B cell (primary cell): ENCODE measurements at regions of chrX and their contacts with region 1.

Region 1: DNA sequence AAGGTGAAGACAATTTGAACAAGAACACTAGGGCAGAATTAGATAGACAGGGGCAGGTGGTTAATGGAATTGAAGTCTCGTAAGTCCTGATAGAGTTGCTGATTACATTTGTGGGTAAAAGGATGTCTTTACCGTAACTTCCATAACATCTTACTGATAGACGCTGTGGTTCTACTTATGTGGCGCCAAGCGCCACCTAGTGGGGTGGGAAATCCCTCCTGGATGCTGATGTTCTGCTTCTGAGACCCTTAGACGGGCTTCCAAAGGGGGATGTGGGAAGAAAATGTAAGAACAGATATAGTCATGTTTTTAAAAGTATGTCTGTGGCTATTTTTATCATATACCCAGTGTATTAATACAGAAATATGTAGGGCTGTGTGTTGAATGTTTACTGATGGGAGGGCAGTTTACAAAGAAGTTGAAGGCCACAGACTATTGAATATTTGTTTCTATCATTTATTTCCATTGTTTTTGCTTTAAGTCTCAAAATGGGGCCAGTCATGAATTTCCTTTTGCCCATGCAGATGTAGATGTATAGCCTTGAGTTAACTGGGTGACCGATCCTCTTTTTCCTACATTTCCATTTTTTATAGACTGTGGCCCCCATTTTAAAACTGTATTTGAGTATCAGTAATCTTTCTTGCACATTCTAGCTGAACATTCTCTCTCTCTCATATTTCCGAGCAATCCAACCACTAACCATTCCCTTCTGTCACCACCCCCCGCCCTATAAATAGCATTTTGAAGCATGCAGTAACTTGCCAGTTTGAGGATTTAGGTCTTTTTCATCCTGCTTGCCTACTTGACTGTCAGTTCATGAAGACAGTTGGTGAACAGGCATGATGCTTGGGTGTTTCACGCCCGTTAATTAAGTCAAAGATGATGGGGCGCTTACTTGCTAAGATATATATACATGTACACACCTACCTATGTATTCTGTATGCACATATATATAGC is 12.1 kb upstream of the TLR8 start:
- DNase-seq: peak; percentile 73
- ATAC-seq: peak; percentile 63
- H3K4me3 ChIP-seq: no peak overlapping the region
- H3K4me3 Mint-ChIP-seq: peak overlapping the region; percentile 57
- H3K27ac ChIP-seq: no peak overlapping the region
- H3K27ac Mint-ChIP-seq: no peak overlapping the region
- H3K4me1 ChIP-seq: peaks cover 44% of the 10 kb centered on the region in 2 donors
- H3K4me1 Mint-ChIP-seq: peaks cover 55% of the 10 kb centered on the region
- H3K27me3 ChIP-seq: no peaks in the 10 kb centered on the region
- H3K27me3 Mint-ChIP-seq: no peaks in the 10 kb centered on the region
- CTCF ChIP-seq: peak; percentile 76

Region 2: GRCh38 chrX:12814420-12814819 is 79.9 kb before region 1 on chrX:
- CTCF ChIA-PET with region 1: interaction called, 159 read pairs
- POLR2A ChIA-PET with region 1: interaction called, 5 read pairs
- intact Hi-C with region 1: loop called (anchors 1 kb)
- DNase-seq: peak; percentile 70
- ATAC-seq: peak; percentile 68
- H3K4me3 ChIP-seq: no peak overlapping the region
- H3K4me3 Mint-ChIP-seq: no peak overlapping the region
- H3K27ac ChIP-seq: no peak overlapping the region
- H3K27ac Mint-ChIP-seq: no peak overlapping the region
- H3K4me1 ChIP-seq: no peaks in the 10 kb centered on the region
- H3K4me1 Mint-ChIP-seq: no peaks in the 10 kb centered on the region
- H3K27me3 ChIP-seq: no peaks in the 10 kb centered on the region
- H3K27me3 Mint-ChIP-seq: no peaks in the 10 kb centered on the region
- CTCF ChIP-seq: peak; percentile 68

Region 3: DNA sequence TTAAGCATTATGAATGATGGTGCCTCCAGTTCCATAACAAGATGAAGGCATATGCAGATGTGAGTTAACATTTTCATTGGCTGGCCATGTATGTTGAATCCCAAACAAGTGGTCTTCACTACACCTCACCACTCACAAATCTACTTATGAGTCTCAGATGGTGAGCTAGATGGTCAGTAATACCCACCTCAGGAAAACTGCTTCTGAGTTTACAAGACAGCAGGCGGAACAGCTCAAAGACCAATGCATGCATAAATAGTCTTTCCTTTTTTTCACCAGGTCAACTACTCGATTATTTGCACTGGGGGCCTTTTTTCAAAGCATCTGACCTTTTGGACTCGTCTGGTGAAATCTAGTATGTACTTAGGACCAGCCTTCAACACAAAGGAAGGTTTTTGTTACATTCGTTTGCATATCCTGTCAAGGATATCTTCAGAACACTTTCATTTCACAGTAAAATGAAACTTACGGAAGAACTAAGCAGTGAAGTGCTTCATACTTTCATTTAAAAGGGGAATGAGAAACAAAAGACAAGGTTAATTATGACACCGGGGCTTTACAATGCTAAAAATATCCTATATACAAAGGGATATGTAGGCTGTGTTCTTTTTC is 50.6 kb before region 1 on chrX:
- CTCF ChIA-PET with region 1: no interaction called
- POLR2A ChIA-PET with region 1: no interaction called
- intact Hi-C with region 1: loop called (anchors 10 kb)
- DNase-seq: peak; percentile 32
- ATAC-seq: peak; percentile 58
- H3K4me3 ChIP-seq: peak overlapping the region in 4 of 5 experiments; percentile 19 to 58 (median 32)
- H3K4me3 Mint-ChIP-seq: peak overlapping the region; percentile 86
- H3K27ac ChIP-seq: peak overlapping the region; percentile 75 to 84
- H3K27ac Mint-ChIP-seq: peak overlapping the region; percentile 91
- H3K4me1 ChIP-seq: peaks cover 17 to 19% of the 10 kb centered on the region in 2 donors
- H3K4me1 Mint-ChIP-seq: peaks cover 12% of the 10 kb centered on the region
- H3K27me3 ChIP-seq: no peaks in the 10 kb centered on the region
- H3K27me3 Mint-ChIP-seq: no peaks in the 10 kb centered on the region
- CTCF ChIP-seq: no peak

Region 4: DNA sequence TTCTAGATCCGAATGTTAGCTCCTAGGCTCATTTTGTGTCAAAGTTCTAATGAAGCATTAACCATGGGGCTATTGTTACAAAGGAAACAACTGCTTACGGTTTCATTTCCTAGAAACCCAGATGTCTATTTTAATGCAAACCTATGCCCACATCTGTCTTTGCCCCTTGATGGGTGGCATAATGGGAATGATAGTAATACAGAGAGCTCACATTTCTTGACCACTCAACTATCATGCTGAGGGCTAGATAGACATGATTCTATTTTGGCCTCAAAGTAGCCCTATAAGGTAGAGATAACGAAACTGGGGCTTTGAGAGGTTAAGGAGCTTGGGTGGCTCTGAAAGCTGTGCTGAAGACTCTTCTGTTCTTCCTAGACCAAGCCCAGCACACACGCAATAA is 25.6 kb before region 1 on chrX:
- CTCF ChIA-PET with region 1: interaction called, 11 read pairs
- POLR2A ChIA-PET with region 1: interaction called, 6 read pairs
- intact Hi-C with region 1: loop called (anchors 2 kb)
- DNase-seq: no peak
- ATAC-seq: peak; percentile 19
- H3K4me3 ChIP-seq: peak overlapping the region in 4 of 5 experiments; percentile 43 to 74 (median 58)
- H3K4me3 Mint-ChIP-seq: peak overlapping the region; percentile 92
- H3K27ac ChIP-seq: peak overlapping the region; percentile 56 to 80
- H3K27ac Mint-ChIP-seq: peak overlapping the region; percentile 93
- H3K4me1 ChIP-seq: peaks cover 45 to 71% of the 10 kb centered on the region in 2 donors
- H3K4me1 Mint-ChIP-seq: peaks cover 66% of the 10 kb centered on the region
- H3K27me3 ChIP-seq: no peaks in the 10 kb centered on the region
- H3K27me3 Mint-ChIP-seq: no peaks in the 10 kb centered on the region
- CTCF ChIP-seq: no peak

Region 5: GRCh38 chrX:14872851-14873675 is 1978.7 kb after region 1 on chrX and contains the starts of genes FANCB and MOSPD2:
- CTCF ChIA-PET with region 1: no interaction called
- POLR2A ChIA-PET with region 1: no interaction called
- intact Hi-C with region 1: no loop called
- DNase-seq: peak; percentile 94
- ATAC-seq: peak; percentile 91
- H3K4me3 ChIP-seq: peak within 1 kb of the TSS; percentile 69 to 89 (median 75)
- H3K4me3 Mint-ChIP-seq: peak within 1 kb of the TSS; percentile 92
- H3K27ac ChIP-seq: peak within 1 kb of the TSS; percentile 80 to 85
- H3K27ac Mint-ChIP-seq: peak within 1 kb of the TSS; percentile 93
- H3K4me1 ChIP-seq: peaks cover 7 to 11% of the 10 kb centered on the region in 2 donors
- H3K4me1 Mint-ChIP-seq: peaks cover 13% of the 10 kb centered on the region
- H3K27me3 ChIP-seq: no peaks in the 10 kb centered on the region
- H3K27me3 Mint-ChIP-seq: no peaks in the 10 kb centered on the region
- CTCF ChIP-seq: no peak
- total RNA-seq, gene FANCB: 3.9 and 7.6 TPM in 2 replicates
- total RNA-seq, gene MOSPD2: 23.1 and 27.0 TPM in 2 replicates